Naive thymus-derived CD4-positive, alpha-beta T cell (primary cell): ENCODE measurements at regions of chrX and their contacts with region 1.

Region 1: DNA sequence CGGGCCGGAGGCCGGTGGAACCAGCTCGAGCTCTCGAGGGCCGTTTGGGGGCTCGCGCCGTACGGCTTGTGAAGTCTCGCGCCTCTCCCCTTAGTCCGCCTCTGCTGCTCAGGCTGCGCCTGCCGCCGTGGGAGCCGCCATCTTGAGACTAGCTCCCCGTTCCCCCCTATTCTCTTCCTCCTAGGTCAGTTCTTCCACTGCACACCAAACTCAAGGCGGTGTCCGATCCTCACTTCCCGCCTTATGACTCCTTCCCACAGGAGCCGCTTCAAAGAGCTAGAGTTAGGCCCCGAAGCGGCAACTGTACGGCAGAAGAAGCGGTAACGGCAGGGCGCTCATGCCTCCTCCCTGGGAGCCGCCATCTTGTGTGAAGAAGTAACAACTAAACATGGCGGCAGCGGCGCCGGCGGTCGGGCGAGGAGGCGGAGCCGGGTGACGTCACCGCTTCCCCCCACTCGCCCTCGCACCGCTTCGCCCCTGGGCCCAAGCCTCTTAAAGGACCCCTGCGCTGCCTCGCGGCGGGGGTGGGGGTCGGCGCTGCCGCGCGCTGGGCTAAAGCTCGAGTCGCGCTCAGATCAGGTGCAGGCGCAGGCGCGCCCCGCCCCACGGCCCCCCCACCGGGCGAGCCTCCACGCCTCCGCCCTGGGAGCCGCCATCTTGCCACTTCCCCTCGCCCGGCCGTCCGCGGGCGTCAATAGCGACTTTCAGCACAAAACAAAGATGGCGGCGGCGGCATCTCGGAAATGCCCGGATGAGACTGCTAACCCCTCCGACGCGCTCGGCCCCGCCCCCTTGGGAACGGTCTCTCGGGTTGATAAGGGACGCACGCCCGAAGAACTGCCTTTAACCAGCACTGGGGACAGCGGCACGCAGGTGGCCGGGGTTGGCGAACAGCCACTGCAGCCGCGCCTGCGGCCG is at the start of gene HCFC1:
- DNase-seq: peak; percentile 82 to 98 (median 93)
- ATAC-seq: peak; percentile 65
- H3K4me3 ChIP-seq: peak within 1 kb of the TSS; percentile 97
- H3K4me3 Mint-ChIP-seq: peak within 1 kb of the TSS; percentile 91 to 100 (median 100)
- H3K27ac ChIP-seq: peak within 1 kb of the TSS; percentile 99
- H3K27ac Mint-ChIP-seq: peak within 1 kb of the TSS; percentile 93 to 100 (median 100)
- H3K4me1 ChIP-seq: peaks cover 28 to 29% of the 10 kb centered on the region in 2 donors
- H3K4me1 Mint-ChIP-seq: peaks cover 21 to 52% (median 34%) of the 10 kb centered on the region in 7 donors
- H3K27me3 ChIP-seq: no peaks in the 10 kb centered on the region
- H3K27me3 Mint-ChIP-seq: no peaks in the 10 kb centered on the region
- total RNA-seq, gene HCFC1: 52.3 to 106 (median 67.2) TPM

Region 2: GRCh38 chrX:153599192-153600031 is 372.3 kb before region 1 on chrX:
- CTCF ChIA-PET with region 1: no interaction called
- POLR2A ChIA-PET with region 1: interaction called, 5 read pairs
- intact Hi-C with region 1: loop called in 1 of 2 experiments (anchors 10 kb)
- DNase-seq: peak; percentile 77 to 91 (median 82)
- ATAC-seq: peak; percentile 94
- H3K4me3 ChIP-seq: peak overlapping the region; percentile 69
- H3K4me3 Mint-ChIP-seq: peak overlapping the region; percentile 79 to 93 (median 90)
- H3K27ac ChIP-seq: peak overlapping the region; percentile 74
- H3K27ac Mint-ChIP-seq: peak overlapping the region in 7 of 9 donors; percentile 48 to 83 (median 64)
- H3K4me1 ChIP-seq: peaks cover 19 to 21% of the 10 kb centered on the region in 2 donors
- H3K4me1 Mint-ChIP-seq: peaks cover 23 to 60% (median 46%) of the 10 kb centered on the region in 7 donors
- H3K27me3 ChIP-seq: no peaks in the 10 kb centered on the region
- H3K27me3 Mint-ChIP-seq: no peaks in the 10 kb centered on the region

Region 3: DNA sequence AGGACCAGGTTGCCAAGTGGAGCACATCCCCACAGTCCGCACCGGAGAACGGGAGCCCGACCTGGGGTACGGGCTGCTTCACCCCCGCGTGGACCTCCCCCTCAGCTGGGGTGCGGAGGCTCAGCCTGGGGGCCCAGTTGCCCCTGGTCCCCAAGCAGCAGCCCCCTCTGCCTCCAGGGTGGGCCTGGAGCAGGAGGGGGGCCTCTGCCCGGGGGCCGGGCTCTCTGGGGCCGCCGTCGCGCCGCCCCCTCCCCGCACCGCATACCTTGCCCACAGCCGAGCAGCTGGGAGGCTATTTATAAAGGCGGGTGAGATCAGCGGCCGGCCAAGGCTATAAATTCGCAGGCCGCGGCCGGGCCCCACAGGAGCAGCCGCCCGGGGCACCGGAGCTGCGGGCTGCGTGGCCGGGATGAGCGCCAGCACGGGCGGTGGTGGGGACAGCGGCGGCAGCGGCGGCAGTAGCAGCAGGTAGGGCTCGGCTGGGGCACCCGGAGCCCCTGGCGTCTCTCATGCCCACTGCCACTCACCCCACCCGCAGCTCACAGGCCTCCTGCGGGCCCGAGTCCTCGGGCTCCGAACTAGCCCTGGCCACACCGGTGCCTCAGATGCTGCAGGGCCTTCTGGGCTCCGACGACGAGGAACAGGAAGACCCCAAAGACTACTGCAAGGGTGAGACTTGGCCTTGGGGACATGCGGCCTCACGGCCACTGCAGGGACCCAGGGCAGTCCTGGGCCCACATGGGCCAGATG is 190.9 kb before region 1 on chrX and contains the start of gene SRPK3:
- CTCF ChIA-PET with region 1: no interaction called
- POLR2A ChIA-PET with region 1: no interaction called
- intact Hi-C with region 1: no loop called
- DNase-seq: no peak
- ATAC-seq: no peak
- H3K4me3 ChIP-seq: no peak within 1 kb of the TSS
- H3K4me3 Mint-ChIP-seq: peak within 1 kb of the TSS in 6 of 10 donors; percentile 21 to 76 (median 44)
- H3K27ac ChIP-seq: no peak within 1 kb of the TSS
- H3K27ac Mint-ChIP-seq: peak within 1 kb of the TSS in 2 of 9 donors; percentile 25 to 59
- H3K4me1 ChIP-seq: no peaks in the 10 kb centered on the region
- H3K4me1 Mint-ChIP-seq: peaks cover 0 to 7% (median 4%) of the 10 kb centered on the region in 7 donors
- H3K27me3 ChIP-seq: no peaks in the 10 kb centered on the region
- H3K27me3 Mint-ChIP-seq: peaks cover 0 to 10% (median 7%) of the 10 kb centered on the region in 5 donors
- total RNA-seq, gene SRPK3: not detected

Region 4: DNA sequence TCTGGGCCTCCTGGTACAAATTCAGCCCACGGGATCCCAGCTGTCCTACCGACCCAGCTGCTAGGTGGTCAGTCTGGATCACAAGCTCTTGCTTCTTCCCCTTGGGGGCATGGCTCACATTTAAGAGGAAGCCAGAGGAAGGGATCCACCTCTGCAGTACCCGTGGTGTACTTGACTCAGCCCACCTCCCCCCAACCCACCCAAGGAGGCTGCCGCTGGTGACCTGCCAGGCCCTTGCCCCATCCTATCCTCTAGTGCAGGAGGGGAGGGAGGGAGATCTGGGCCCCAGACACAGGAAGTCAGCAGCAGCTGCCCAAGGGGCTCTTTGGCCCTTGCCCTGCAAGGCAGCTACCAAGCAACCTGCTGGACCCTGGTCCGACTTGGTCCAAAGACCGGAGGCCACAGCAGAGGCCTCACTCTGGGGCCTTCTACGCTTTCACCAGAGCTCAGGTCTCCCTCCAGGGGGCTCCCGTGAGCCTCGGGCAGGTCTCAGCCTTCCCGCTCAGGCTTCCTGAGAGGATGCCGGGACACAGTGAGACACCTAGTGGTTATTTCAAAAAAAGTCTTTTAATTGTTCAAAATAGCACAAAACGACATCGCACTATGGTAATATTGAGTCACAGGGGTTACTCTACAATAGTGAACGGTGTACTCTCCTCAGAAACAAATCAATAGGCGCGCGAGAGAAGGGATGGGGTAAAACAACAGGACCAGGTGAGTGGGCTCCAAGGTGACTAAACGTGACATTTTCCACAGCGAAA is 24.5 kb before region 1 on chrX:
- CTCF ChIA-PET with region 1: interaction called, 22 read pairs
- POLR2A ChIA-PET with region 1: interaction called, 63 read pairs
- intact Hi-C with region 1: loop called (anchors 2 kb)
- DNase-seq: peak; percentile 58 to 83 (median 78)
- ATAC-seq: peak; percentile 93
- H3K4me3 ChIP-seq: no peak overlapping the region
- H3K4me3 Mint-ChIP-seq: peak overlapping the region; percentile 0 to 69 (median 32)
- H3K27ac ChIP-seq: no peak overlapping the region
- H3K27ac Mint-ChIP-seq: peak overlapping the region; percentile 26 to 94 (median 87)
- H3K4me1 ChIP-seq: peaks cover 3 to 9% of the 10 kb centered on the region in 2 donors
- H3K4me1 Mint-ChIP-seq: peaks cover 6 to 30% (median 20%) of the 10 kb centered on the region in 7 donors
- H3K27me3 ChIP-seq: no peaks in the 10 kb centered on the region
- H3K27me3 Mint-ChIP-seq: no peaks in the 10 kb centered on the region

Region 5: GRCh38 chrX:154013614-154014360 is 42.1 kb after region 1 on chrX:
- CTCF ChIA-PET with region 1: interaction called, 4 read pairs
- POLR2A ChIA-PET with region 1: interaction called, 14 read pairs
- intact Hi-C with region 1: loop called (anchors 1 to 5 kb)
- DNase-seq: peak; percentile 24 to 66 (median 47)
- ATAC-seq: peak; percentile 83
- H3K4me3 ChIP-seq: no peak overlapping the region
- H3K4me3 Mint-ChIP-seq: no peak overlapping the region
- H3K27ac ChIP-seq: no peak overlapping the region
- H3K27ac Mint-ChIP-seq: peak overlapping the region in 4 of 9 donors; percentile 12 to 84 (median 68)
- H3K4me1 ChIP-seq: no peaks in the 10 kb centered on the region
- H3K4me1 Mint-ChIP-seq: peaks cover 0 to 17% (median 8%) of the 10 kb centered on the region in 7 donors
- H3K27me3 ChIP-seq: no peaks in the 10 kb centered on the region
- H3K27me3 Mint-ChIP-seq: no peaks in the 10 kb centered on the region

Region 6: GRCh38 chrX:154063234-154063633 is 91.5 kb after region 1 on chrX:
- CTCF ChIA-PET with region 1: no interaction called
- POLR2A ChIA-PET with region 1: no interaction called
- intact Hi-C with region 1: no loop called
- DNase-seq: peak in 1 of 9 donors; percentile 17
- ATAC-seq: no peak
- H3K4me3 ChIP-seq: no peak overlapping the region
- H3K4me3 Mint-ChIP-seq: peak overlapping the region in 5 of 10 donors; percentile 21 to 51 (median 29)
- H3K27ac ChIP-seq: peak overlapping the region; percentile 44
- H3K27ac Mint-ChIP-seq: peak overlapping the region in 8 of 9 donors; percentile 39 to 89 (median 60)
- H3K4me1 ChIP-seq: peaks cover 10 to 20% of the 10 kb centered on the region in 2 donors
- H3K4me1 Mint-ChIP-seq: peaks cover 43 to 88% (median 72%) of the 10 kb centered on the region in 7 donors
- H3K27me3 ChIP-seq: no peaks in the 10 kb centered on the region
- H3K27me3 Mint-ChIP-seq: no peaks in the 10 kb centered on the region

Region 7: GRCh38 chrX:154370882-154371770 is 399.4 kb after region 1 on chrX:
- CTCF ChIA-PET with region 1: no interaction called
- POLR2A ChIA-PET with region 1: interaction called, 3 read pairs
- intact Hi-C with region 1: loop called (anchors 2 kb)
- DNase-seq: peak; percentile 73 to 91 (median 89)
- ATAC-seq: peak; percentile 77
- H3K4me3 ChIP-seq: peak overlapping the region; percentile 82
- H3K4me3 Mint-ChIP-seq: peak overlapping the region; percentile 77 to 89 (median 83)
- H3K27ac ChIP-seq: peak overlapping the region; percentile 91
- H3K27ac Mint-ChIP-seq: peak overlapping the region in 7 of 9 donors; percentile 25 to 77 (median 62)
- H3K4me1 ChIP-seq: peaks cover 29 to 37% of the 10 kb centered on the region in 2 donors
- H3K4me1 Mint-ChIP-seq: peaks cover 0 to 25% (median 17%) of the 10 kb centered on the region in 7 donors
- H3K27me3 ChIP-seq: no peaks in the 10 kb centered on the region
- H3K27me3 Mint-ChIP-seq: no peaks in the 10 kb centered on the region

Region 8: GRCh38 chrX:154547245-154548027 is 575.7 kb after region 1 on chrX and contains the start of gene IKBKG:
- CTCF ChIA-PET with region 1: no interaction called
- POLR2A ChIA-PET with region 1: interaction called, 4 read pairs
- intact Hi-C with region 1: loop called in 1 of 2 experiments (anchors 1 kb)
- DNase-seq: peak; percentile 83 to 92 (median 91)
- ATAC-seq: peak; percentile 89
- H3K4me3 ChIP-seq: peak within 1 kb of the TSS; percentile 75
- H3K4me3 Mint-ChIP-seq: peak within 1 kb of the TSS; percentile 84 to 98 (median 90)
- H3K27ac ChIP-seq: peak within 1 kb of the TSS; percentile 93
- H3K27ac Mint-ChIP-seq: peak within 1 kb of the TSS; percentile 88 to 97 (median 93)
- H3K4me1 ChIP-seq: peaks cover 25 to 44% of the 10 kb centered on the region in 2 donors
- H3K4me1 Mint-ChIP-seq: peaks cover 24 to 58% (median 42%) of the 10 kb centered on the region in 7 donors
- H3K27me3 ChIP-seq: no peaks in the 10 kb centered on the region
- H3K27me3 Mint-ChIP-seq: no peaks in the 10 kb centered on the region
- total RNA-seq, gene IKBKG: 29.6 to 45.5 (median 38.8) TPM